GM18951 (cell line): ENCODE measurements at regions of chr1 and their contacts with region 1.

Region 1: DNA sequence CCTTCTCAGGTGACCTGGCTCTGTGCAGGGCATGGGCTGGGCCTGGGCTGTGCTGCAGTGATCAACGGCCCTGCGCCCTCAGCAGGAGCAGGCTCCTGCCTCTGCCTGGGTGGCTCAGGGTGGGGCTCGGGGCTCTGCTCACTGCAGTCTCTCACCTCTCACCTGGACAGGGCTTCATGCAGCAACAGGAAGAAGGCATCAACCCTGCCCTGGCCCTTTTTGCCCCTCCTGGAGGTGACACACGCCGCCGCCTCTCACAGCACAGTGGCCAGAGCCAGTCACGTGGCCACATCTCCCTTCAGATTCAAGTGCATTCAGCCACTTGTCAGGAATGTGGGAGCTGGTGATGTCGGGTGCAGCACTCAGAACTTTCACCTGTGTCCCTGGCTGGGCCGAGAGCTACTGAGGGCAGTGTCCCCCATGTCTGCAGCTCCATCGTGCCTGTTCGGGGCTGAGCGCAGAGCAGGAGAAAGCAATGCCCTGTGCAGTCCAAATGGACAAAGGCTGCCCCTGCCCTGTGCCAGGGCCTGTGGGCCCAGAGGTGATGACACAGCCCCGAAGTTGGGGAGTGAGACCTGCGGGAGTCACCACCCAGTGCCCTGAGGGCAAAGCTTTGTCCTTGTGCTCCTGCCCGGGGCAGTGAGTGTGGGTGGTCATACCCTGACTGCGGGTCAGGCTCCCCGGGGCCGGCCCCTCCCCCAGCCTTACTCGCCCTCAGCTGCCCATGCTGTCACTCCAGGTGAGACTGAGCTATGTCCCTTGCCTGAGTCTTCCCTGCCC is 314.0 kb downstream of the PTPRU start:
- POLR2A ChIP-seq: no peak

Region 2: GRCh38 chr1:29062157-29062942 is 488.0 kb before region 1 on chr1:
- in situ Hi-C with region 1: no loop called
- POLR2A ChIP-seq: no peak

Region 3: DNA sequence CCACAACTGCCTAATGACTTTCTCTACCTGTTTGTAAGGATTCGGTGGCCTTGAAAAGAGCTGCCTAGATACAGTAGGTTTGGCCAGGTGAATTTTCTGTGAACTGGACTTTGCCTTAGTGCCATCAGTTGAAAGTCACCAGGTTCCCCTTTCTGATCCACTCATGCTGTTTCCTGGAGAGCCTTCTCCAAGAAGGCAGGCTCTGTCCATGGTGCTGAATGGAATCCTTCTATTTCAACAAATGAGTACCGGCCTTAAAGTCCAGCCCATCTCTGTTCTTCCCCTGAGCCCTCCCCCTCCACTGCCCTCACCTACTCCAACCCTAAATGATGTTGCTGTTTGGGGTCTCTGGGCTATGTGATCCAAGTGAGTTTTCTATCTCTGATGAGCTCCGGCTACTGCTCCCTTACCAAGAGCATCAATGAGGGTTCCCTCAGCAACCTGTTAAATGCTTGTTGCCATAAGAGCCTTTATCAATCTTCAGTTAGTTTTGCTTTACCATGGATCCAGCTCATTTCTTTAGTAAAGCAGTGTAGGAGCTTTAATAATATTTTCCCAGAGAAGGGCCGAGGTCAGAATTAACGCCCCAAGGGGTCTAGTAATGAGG is 186.4 kb after region 1 on chr1:
- in situ Hi-C with region 1: no loop called
- POLR2A ChIP-seq: no peak

Region 4: DNA sequence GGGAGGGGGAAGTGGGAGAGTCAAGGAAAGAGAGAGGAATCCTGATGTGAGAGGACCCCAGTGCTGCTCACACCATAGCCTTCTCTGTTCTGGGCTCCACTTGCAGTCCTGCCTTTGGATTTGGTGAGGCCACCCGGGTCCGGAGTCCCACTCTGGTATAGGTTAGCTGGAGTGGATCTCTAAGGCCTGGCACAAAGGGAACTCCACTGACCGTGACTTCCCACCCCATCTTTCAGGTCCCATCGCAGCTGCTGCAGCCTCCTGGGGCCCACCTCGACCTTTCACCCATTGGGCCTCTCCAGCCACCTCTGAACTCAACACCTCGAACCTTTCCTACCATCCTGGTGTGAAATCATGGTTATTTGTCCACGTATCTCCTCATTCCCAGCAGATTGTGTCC is 848.7 kb after region 1 on chr1:
- in situ Hi-C with region 1: no loop called
- POLR2A ChIP-seq: no peak

Region 5: GRCh38 chr1:30657759-30658253 is 1107.5 kb after region 1 on chr1:
- in situ Hi-C with region 1: loop called (anchors 5 kb)
- POLR2A ChIP-seq: no peak